Activated B cell treated with CpG ODN at 0.5 μM for 24 hours (primary cell): ENCODE measurements at regions of chr16 and their contacts with region 1.

Region 1: DNA sequence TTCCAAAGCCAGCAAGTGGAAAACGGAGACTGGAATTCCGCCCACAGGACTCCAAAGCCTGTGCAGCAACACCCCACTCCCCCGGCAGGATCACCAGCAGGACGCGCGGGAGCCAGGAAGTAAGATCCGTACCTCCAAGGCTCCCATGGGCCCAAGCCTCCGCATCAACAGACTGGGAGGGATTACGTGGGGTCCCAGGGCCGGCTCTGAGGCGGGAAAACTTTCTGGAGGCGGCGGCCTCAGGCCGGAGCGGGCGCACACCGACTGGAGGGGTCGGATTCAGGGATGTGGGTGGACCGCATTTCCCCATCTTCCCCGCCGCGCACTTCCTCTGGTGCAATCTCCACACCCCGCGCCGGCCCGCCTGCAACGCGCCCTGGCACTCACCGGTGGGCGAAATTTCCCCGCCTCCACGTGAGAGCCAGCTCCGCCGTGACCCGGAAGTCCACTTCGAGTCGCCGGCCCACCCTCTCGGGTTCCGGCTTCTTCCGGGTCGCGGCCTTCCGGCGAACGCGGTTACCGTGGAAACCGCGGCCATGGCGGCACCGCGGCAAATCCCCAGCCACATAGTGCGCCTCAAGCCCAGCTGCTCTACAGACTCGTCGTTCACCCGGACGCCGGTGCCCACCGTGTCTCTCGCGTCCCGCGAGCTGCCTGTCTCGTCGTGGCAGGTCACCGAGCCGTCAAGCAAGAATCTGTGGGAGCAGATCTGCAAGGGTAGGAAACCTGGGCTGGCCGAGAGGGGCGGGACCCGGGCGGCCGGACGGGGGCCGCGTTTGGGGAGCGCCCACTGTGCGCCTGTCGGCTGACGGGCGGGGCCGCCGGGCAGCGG is at the starts of genes IQCK and KNOP1:
- DNase-seq: peak; percentile 85
- ATAC-seq: peak; percentile 92
- H3K4me3 Mint-ChIP-seq: peak within 1 kb of the TSS; percentile 94
- H3K27ac Mint-ChIP-seq: peak within 1 kb of the TSS; percentile 65
- H3K4me1 Mint-ChIP-seq: peaks cover 24% of the 10 kb centered on the region
- H3K27me3 Mint-ChIP-seq: no peaks in the 10 kb centered on the region
- CTCF ChIP-seq: no peak
- total RNA-seq, gene IQCK: 3.2 and 3.8 TPM in 2 replicates
- total RNA-seq, gene KNOP1: 19.0 and 20.5 TPM in 2 replicates

Region 2: GRCh38 chr16:18789850-18790724 is 927.9 kb before region 1 on chr16 and contains the start of gene RPS15A:
- CTCF ChIA-PET with region 1: no interaction called
- POLR2A ChIA-PET with region 1: interaction called, 11 read pairs
- intact Hi-C with region 1: loop called (anchors 1 kb)
- DNase-seq: peak; percentile 79
- ATAC-seq: peak; percentile 98
- H3K4me3 Mint-ChIP-seq: peak within 1 kb of the TSS; percentile 98
- H3K27ac Mint-ChIP-seq: peak within 1 kb of the TSS; percentile 89
- H3K4me1 Mint-ChIP-seq: peaks cover 51% of the 10 kb centered on the region
- H3K27me3 Mint-ChIP-seq: no peaks in the 10 kb centered on the region
- CTCF ChIP-seq: no peak
- total RNA-seq, gene RPS15A: 2,443 and 2,956 TPM in 2 replicates

Region 3: DNA sequence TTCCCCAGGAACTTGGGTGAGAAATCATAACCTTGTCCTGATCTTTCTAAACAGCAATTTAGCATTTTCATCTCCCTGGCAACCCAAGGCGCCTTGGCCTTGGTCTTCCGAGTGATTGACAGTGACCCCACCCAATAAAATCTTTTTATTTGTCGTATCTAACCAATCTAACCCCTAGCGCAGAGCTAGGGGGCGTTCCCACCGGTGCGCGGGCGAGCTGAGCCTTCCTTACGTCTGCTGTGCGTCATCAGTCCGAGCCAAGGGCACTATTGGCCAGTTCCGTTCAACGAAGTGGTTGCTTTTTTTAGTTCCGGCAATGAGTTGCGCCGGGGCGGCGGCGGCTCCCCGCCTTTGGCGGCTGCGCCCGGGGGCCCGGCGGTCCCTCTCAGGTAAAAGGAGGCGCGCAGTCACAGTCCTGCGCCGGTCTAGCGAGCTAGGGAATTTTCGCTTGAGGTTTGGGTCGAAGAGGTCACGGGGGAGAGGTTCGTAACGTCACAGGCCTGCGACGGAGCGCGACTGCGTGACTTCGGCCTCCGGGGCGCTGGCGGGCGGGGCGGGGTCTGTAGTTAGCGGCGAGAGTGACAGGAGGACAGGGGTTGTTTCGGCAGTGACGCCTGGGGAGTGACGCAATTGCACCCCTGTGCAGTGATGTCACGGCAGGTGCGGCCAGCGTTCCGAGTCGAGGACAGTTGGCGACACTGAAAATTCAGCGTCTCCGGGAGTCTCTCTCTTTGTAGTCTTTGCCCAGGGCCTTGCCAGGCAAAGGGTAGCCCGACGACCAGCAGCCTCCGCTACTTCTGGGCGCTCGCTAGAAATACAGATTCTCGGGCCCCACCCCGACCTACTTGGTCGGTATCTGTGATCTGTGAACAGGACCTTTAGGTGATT is 650.4 kb before region 1 on chr16 and contains the start of gene COQ7:
- CTCF ChIA-PET with region 1: no interaction called
- POLR2A ChIA-PET with region 1: no interaction called
- intact Hi-C with region 1: loop called (anchors 5 kb)
- DNase-seq: peak; percentile 95
- ATAC-seq: peak; percentile 90
- H3K4me3 Mint-ChIP-seq: peak within 1 kb of the TSS; percentile 93
- H3K27ac Mint-ChIP-seq: peak within 1 kb of the TSS; percentile 97
- H3K4me1 Mint-ChIP-seq: peaks cover 17% of the 10 kb centered on the region
- H3K27me3 Mint-ChIP-seq: peaks cover 4% of the 10 kb centered on the region
- CTCF ChIP-seq: no peak
- total RNA-seq, gene COQ7: 13.6 and 17.5 TPM in 2 replicates

Region 4: DNA sequence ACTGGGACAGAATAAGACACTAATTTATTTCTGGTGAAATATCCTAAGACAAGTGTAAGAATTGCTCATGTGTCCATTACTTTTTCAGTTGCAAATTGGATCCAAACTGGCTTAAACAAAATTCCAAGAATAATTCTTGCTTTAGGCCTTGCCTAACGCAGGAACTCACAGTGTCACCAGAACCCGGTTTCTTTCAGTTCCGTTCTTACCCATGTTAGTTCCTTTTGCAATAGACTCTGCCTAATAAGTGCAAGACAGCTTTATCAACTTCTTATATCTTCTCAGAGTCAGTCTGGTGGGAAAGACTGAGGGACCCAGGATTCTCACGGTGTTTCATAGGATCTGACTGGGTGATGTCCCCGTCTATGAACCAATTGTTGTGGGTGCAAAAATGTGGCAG is 220.8 kb before region 1 on chr16:
- CTCF ChIA-PET with region 1: no interaction called
- POLR2A ChIA-PET with region 1: no interaction called
- intact Hi-C with region 1: no loop called
- DNase-seq: no peak
- ATAC-seq: no peak
- H3K4me3 Mint-ChIP-seq: no peak overlapping the region
- H3K27ac Mint-ChIP-seq: no peak overlapping the region
- H3K4me1 Mint-ChIP-seq: peaks cover 12% of the 10 kb centered on the region
- H3K27me3 Mint-ChIP-seq: no peaks in the 10 kb centered on the region
- CTCF ChIP-seq: no peak

Region 5: GRCh38 chr16:19555162-19555937 is 162.6 kb before region 1 on chr16 and contains the start of gene VPS35L:
- CTCF ChIA-PET with region 1: interaction called, 3 read pairs
- POLR2A ChIA-PET with region 1: interaction called, 7 read pairs
- intact Hi-C with region 1: loop called (anchors 2 kb)
- DNase-seq: peak; percentile 95
- ATAC-seq: peak; percentile 94
- H3K4me3 Mint-ChIP-seq: peak within 1 kb of the TSS; percentile 95
- H3K27ac Mint-ChIP-seq: peak within 1 kb of the TSS; percentile 91
- H3K4me1 Mint-ChIP-seq: peaks cover 26% of the 10 kb centered on the region
- H3K27me3 Mint-ChIP-seq: no peaks in the 10 kb centered on the region
- CTCF ChIP-seq: no peak
- total RNA-seq, gene VPS35L: 59.7 and 66.0 TPM in 2 replicates